PC-9 (cell line): ENCODE measurements at regions of chr14 and their contacts with region 1.

Region 1: GRCh38 chr14:70027785-70028428 is 148.7 kb downstream of the SMOC1 start:
- DNase-seq: peak in 1 of 2 experiments; percentile 59
- H3K4me3 ChIP-seq: no peak overlapping the region
- H3K27ac ChIP-seq: no peak overlapping the region
- H3K4me1 ChIP-seq: no peaks in the 10 kb centered on the region
- H3K27me3 ChIP-seq: peaks cover 9% of the 10 kb centered on the region; the same call in 1 of the 2 replicates
- CTCF ChIP-seq: peak; percentile 96

Region 2: GRCh38 chr14:69863083-69863482 is 164.8 kb before region 1 on chr14:
- CTCF ChIA-PET with region 1: no interaction called
- POLR2A ChIA-PET with region 1: no interaction called
- intact Hi-C with region 1: loop called (anchors 10 kb)
- DNase-seq: no peak
- H3K4me3 ChIP-seq: no peak overlapping the region
- H3K27ac ChIP-seq: no peak overlapping the region
- H3K4me1 ChIP-seq: no peaks in the 10 kb centered on the region
- H3K27me3 ChIP-seq: peaks cover 19% of the 10 kb centered on the region
- CTCF ChIP-seq: no peak